PC-3 (cell line): ENCODE measurements at regions of chr21 and their contacts with region 1.

Region 1: GRCh38 chr21:46465651-46466050 is 7.0 kb downstream of the DIP2A start:
- DNase-seq: no peak
- ATAC-seq: no peak
- H3K4me3 ChIP-seq: no peak overlapping the region
- H3K27ac ChIP-seq: no peak overlapping the region
- H3K4me1 ChIP-seq: no peaks in the 10 kb centered on the region
- H3K27me3 ChIP-seq: no peaks in the 10 kb centered on the region
- CTCF ChIP-seq: no peak

Region 2: DNA sequence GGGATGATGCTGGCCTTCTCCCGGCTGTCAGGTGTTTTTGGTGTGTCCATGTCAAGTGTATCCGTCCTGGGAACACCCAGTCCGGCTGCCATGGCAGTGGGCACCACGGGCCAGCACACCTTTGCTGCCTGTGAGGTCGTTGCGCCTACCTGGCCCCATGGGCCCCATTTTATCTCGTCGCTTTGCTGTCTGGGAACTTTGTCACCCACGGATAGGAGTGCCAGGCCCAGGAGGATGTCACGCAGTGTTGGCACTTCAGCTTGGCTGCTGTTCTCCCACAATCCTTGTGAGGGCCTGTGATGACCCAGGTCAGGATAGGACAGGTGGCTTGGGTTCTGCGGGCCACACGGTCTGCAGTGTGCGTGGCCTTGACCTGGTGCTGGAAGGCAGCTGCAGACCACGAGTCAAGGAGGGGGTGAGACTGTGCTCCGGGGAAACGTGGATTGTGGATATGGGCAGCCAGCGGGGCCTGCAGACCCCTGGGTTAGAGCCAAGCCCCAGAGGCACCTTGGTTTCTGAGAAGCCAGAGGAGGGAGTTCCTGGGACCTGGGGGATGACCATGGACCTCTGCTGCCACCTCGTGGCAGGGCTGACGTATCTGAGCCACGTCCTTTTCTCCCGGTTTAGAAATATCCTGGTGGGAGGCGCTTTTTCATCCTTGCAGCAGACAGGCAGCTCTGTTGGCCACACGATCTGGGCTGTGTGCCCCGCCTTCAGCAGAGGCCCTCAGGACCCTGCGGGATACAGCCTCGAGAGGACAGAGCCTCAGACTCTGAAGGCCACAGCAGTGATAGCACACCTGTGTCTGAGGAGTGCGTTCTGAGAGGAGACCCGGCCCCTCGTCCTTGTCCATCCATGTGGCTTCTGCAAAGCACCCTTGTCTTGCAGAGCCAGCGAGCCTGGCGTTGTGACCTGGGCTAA is 645.2 kb before region 1 on chr21:
- CTCF ChIA-PET with region 1: no interaction called
- POLR2A ChIA-PET with region 1: no interaction called
- intact Hi-C with region 1: no loop called
- DNase-seq: peak; percentile 95
- ATAC-seq: peak; percentile 68
- H3K4me3 ChIP-seq: no peak overlapping the region
- H3K27ac ChIP-seq: peak overlapping the region; percentile 90
- H3K4me1 ChIP-seq: peaks cover 31% of the 10 kb centered on the region
- H3K27me3 ChIP-seq: no peaks in the 10 kb centered on the region
- CTCF ChIP-seq: peak; percentile 95

Region 3: GRCh38 chr21:46489162-46489663 is 23.6 kb after region 1 on chr21:
- CTCF ChIA-PET with region 1: no interaction called
- POLR2A ChIA-PET with region 1: no interaction called
- intact Hi-C with region 1: no loop called
- DNase-seq: no peak
- ATAC-seq: no peak
- H3K4me3 ChIP-seq: no peak overlapping the region
- H3K27ac ChIP-seq: no peak overlapping the region
- H3K4me1 ChIP-seq: no peaks in the 10 kb centered on the region
- H3K27me3 ChIP-seq: no peaks in the 10 kb centered on the region
- CTCF ChIP-seq: no peak

Region 4: DNA sequence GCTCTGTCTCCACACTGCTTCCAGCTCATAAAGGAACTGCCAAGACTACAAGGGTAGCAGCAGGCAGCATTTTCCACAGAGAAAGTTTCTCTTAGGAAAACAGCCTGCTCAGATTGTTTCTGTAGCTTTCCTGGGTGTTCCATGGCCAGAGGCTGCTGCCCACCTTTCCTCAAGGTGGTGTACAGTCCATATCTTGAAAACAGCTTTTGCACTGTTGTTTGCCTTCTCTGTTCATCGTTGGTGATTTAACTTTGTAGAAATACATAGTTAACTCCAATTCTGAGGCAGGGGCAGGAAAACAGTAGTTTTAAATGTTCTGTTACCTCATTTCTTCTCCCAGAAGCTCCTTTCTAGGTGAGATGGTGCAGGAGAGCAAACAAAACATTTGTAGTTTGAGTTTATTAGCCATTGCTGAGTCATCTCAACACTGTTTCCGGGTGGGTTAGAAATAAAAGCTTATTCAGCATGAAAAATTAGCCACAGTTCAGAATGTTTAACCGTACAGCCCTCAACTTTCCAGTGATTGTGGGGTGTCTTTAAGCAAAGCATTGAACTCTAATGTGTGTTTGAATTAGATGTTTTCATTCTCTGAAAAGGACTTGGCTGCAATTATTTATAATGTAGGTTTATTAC is 34.7 kb after region 1 on chr21:
- CTCF ChIA-PET with region 1: no interaction called
- POLR2A ChIA-PET with region 1: no interaction called
- intact Hi-C with region 1: loop called (anchors 5 kb)
- DNase-seq: peak; percentile 85
- ATAC-seq: peak; percentile 83
- H3K4me3 ChIP-seq: peak overlapping the region; percentile 31
- H3K27ac ChIP-seq: peak overlapping the region; percentile 87
- H3K4me1 ChIP-seq: peaks cover 40% of the 10 kb centered on the region
- H3K27me3 ChIP-seq: no peaks in the 10 kb centered on the region
- CTCF ChIP-seq: no peak